Activated naive CD4-positive, alpha-beta T cell treated with anti-CD3 and anti-CD28 coated beads for 36 hours (primary cell): ENCODE measurements at regions of chr13 and their contacts with region 1.

Region 1: DNA sequence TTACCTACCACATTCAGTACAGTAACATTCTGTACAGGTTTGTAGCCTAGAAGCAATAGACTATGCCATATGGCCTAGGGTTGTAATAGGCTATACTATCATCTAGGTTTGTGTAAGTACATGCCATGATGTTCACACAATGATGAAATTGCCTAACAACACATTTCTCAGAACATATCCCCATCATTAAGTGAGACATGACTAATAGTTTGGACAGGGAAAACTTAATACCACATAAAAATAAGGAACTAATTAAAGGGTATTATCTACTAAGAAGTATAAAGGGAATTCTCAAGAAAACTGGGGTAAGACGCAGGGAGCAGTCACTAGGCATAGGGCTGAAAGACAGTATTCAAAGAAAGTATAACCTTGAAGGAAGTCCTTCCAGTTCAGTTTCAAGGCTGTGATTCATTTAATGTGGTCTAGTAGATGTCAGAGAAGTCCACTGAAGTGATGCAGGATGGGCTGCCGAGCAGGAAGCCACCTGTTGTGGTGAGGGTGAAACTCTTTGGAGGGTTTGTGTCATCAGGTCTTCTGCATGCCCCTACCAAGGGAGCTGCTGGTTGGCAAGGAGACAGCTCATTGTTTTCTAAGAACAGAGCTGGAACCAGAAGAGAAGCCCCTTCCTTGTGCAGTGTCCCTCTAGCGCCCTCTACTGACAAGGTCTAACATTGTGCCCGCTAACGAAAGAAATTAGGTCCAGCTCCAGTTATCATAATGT is 122.9 kb downstream of the OLFM4 start:
- DNase-seq: peak; percentile 49
- H3K4me3 Mint-ChIP-seq: no peak overlapping the region
- H3K27ac Mint-ChIP-seq: no peak overlapping the region
- H3K4me1 Mint-ChIP-seq: peaks cover 2% of the 10 kb centered on the region
- H3K27me3 Mint-ChIP-seq: peaks cover 10% of the 10 kb centered on the region

Region 2: GRCh38 chr13:52599848-52600603 is 551.5 kb before region 1 on chr13:
- CTCF ChIA-PET with region 1: no interaction called
- intact Hi-C with region 1: loop called (anchors 10 kb)
- DNase-seq: peak; percentile 14
- H3K4me3 Mint-ChIP-seq: peak overlapping the region; percentile 70
- H3K27ac Mint-ChIP-seq: no peak overlapping the region
- H3K4me1 Mint-ChIP-seq: peaks cover 7% of the 10 kb centered on the region
- H3K27me3 Mint-ChIP-seq: peaks cover 21% of the 10 kb centered on the region

Region 3: DNA sequence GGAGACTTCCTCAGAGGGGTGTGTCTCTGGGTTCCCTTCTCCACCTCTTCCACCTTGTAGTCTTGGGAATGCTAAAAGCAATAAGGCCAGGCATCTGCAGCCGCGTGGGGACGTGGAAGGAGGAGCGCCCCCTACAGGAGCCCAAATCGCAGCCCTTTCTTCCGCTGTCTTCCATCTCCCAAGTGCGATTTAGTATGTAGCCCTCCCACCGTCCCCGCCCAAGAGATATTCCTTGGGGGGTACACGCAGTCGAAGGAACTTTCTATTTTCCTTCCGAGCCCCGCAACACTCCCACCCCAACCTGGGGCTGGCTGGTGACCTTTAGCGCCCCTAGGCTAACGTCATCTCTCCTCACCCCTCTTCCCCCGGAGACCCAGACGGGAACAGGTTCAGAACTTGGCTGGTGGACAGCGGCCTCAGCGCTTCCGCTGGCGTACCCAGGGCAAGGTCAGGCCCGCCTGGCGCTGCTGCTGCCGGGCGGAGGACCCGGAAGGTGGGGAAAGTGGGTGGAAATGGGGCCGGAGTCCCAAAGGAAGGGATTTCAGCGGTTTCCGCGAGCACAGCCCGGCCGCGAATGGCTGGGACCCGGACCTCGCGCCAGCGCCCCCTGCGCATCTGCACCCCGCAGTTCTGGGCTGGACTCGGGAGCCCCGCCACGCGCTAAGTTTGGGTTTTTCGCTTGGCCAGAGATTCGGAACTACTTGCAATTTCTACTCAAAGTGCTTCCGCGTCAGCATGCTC is 300.9 kb before region 1 on chr13:
- CTCF ChIA-PET with region 1: no interaction called
- intact Hi-C with region 1: loop called (anchors 10 kb)
- DNase-seq: peak; percentile 69
- H3K4me3 Mint-ChIP-seq: peak overlapping the region; percentile 63
- H3K27ac Mint-ChIP-seq: no peak overlapping the region
- H3K4me1 Mint-ChIP-seq: peaks cover 28% of the 10 kb centered on the region
- H3K27me3 Mint-ChIP-seq: peaks cover 72% of the 10 kb centered on the region